Calu3 (cell line): ENCODE measurements at regions of chr1 and their contacts with region 1.

Region 1: DNA sequence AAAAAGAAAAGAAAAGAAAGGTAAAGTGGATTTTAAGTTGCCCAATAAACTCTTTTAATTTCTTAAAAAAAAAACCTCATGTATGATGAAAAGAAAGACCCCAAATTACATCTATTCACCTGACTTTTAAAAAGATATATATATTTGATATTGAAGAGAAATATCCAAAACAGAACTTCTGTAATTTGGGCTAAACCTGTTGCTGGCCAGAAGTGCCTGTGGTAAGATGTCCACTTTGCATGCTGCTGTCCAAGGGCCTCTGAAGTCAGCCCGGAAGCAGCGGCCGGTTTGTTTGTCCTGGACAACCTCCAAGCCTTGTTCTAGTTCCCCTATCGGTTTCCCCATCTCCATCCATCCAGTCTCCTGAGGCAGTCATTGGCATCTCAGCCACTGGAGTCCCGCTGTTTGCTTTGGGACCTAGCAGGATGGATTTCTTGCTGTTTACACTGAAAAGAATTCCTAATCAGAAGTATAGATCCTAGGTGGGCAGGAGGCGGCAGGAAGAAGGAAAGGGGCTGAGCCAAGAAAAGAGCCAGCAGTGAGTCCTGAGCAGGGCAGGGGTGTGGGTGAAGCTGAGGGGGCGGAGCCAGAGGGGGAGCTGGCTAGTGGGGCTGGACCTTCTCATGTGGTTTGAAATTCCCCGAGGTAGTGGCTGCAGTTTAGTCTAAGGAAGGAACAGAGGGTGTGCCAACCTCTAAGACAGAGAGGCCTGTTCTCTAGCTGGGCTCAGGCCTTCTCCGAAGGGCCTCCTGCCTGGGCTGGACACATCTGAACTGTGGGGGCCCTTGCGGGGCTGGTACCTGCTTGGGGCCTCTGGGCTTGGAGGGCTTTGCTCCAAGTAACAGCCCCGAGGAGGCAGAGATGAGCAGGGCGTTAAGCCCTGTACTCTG is 3.3 kb downstream of the NCMAP start:
- DNase-seq: peak; percentile 83
- H3K4me3 Mint-ChIP-seq: peak overlapping the region; percentile 96
- H3K27ac Mint-ChIP-seq: peak overlapping the region; percentile 90
- H3K4me1 Mint-ChIP-seq: peaks cover 54% of the 10 kb centered on the region
- H3K27me3 Mint-ChIP-seq: no peaks in the 10 kb centered on the region
- CTCF ChIP-seq: no peak

Region 2: DNA sequence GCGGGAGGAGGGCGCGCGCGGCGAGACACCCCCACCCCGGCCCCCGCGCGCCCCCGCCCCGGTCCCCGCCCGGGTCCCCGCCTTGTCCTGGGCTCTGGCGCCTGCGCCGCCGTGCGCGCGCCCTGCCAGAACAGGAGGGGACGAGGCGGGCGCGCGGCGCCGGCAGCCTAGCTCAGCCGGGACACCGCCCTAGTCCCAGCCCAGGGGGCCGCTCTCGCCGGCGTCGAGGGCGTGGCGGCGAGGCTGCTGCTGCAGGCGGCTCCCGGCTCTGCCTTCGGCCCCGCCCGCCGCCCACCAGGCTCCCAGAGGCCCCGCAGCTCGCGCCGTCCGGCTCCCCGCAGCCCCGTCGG is 56.5 kb before region 1 on chr1 and contains the start of gene RCAN3:
- CTCF ChIA-PET with region 1: no interaction called
- intact Hi-C with region 1: no loop called
- DNase-seq: peak; percentile 87
- H3K4me3 Mint-ChIP-seq: peak within 1 kb of the TSS; percentile 79
- H3K27ac Mint-ChIP-seq: peak within 1 kb of the TSS; percentile 80
- H3K4me1 Mint-ChIP-seq: peaks cover 26% of the 10 kb centered on the region
- H3K27me3 Mint-ChIP-seq: no peaks in the 10 kb centered on the region
- CTCF ChIP-seq: no peak
- total RNA-seq, gene RCAN3: 12.9 and 15.3 TPM in 2 replicates

Region 3: DNA sequence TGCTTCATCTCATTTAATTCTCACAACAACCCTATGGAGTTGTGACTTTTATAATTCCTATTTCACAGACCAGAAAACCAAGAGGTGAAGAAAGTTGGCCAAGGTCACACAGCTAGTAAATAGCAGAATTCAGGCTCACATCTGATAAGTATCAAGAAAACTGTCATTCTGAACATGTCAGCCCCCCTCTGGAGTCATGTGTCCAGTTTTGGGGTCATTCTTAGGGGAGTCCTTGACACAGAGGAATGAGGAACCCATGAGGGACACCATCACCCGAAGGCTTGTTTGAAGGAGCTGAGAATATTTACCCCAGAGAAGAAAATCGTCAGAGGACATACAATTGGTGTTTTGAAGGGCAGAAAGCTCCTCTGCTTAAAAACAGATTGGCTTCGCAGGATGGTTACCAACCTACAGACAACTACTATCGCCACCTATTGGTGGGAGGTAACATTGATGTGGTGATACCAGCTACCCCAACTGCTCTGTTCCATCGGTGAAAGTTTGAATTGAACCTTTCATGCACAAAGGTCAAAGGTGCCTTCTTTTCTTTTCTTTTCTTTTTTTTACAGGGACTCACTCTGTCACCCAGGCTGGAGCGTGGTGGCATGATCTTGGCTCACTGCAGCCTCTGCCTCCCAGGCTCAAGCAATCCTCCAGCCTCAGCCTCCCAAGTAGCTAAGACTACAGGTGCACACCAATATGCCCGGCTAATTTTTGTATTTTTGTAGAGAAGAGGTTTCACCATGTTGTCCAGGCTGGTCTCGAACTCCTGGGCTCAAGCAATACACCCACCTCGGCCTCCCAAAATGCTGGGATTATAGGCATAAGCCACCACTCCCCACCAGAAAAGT is 28.0 kb after region 1 on chr1:
- CTCF ChIA-PET with region 1: interaction called, 10 read pairs
- intact Hi-C with region 1: no loop called
- DNase-seq: peak; percentile 46
- H3K4me3 Mint-ChIP-seq: no peak overlapping the region
- H3K27ac Mint-ChIP-seq: no peak overlapping the region
- H3K4me1 Mint-ChIP-seq: peaks cover 19% of the 10 kb centered on the region
- H3K27me3 Mint-ChIP-seq: no peaks in the 10 kb centered on the region
- CTCF ChIP-seq: peak; percentile 48

Region 4: GRCh38 chr1:24635195-24635843 is 76.2 kb after region 1 on chr1:
- CTCF ChIA-PET with region 1: no interaction called
- intact Hi-C with region 1: loop called (anchors 5 kb)
- DNase-seq: no peak
- H3K4me3 Mint-ChIP-seq: no peak overlapping the region
- H3K27ac Mint-ChIP-seq: no peak overlapping the region
- H3K4me1 Mint-ChIP-seq: peaks cover 12% of the 10 kb centered on the region
- H3K27me3 Mint-ChIP-seq: no peaks in the 10 kb centered on the region
- CTCF ChIP-seq: no peak

Region 5: GRCh38 chr1:24664507-24665033 is 105.4 kb after region 1 on chr1:
- CTCF ChIA-PET with region 1: no interaction called
- intact Hi-C with region 1: no loop called
- DNase-seq: no peak
- H3K4me3 Mint-ChIP-seq: no peak overlapping the region
- H3K27ac Mint-ChIP-seq: no peak overlapping the region
- H3K4me1 Mint-ChIP-seq: no peaks in the 10 kb centered on the region
- H3K27me3 Mint-ChIP-seq: no peaks in the 10 kb centered on the region
- CTCF ChIP-seq: no peak